IMR-90 (cell line): ENCODE measurements at regions of chr1 and their contacts with region 1.

Region 1: DNA sequence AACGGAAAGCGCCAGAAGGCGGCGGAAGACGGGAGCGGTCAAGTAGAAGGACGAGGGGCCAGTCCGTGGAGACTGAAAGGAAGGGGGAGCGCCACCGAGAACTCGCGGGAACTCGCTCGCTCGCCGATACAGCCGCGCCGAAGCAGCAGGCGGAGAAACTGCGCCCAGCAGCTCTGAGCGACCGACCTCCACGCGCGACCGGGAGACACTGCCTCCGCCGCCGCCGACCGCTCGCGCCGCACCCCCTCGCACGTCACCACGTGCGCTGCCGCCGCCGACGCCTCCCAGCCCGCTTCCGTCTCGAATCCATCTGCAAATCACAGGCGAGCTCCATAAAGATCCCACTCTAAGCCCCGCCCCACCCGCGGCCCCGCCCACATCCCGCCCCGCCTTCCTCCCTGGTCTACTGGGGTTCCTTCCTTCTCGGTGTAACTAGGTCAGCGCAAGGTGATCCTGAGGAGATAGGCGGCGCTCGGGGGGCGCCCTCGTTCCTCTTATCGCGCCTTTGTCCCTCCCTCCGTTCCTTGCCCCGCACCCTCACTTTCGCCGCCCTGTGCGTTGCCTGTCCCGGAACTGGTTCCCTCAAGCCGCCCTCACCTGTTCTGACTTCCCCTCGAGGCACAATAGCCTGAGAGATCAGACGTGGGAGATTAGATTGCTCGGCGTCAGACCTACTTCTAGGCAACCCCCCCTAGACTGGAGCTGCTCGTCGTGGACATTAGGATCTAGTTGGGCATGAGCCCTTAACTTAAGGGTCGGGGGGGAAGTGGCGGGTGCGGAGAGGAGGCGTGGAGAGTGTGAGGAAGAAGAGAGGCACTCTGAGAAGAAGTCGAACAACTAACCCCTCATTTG is at the start of gene IVNS1ABP:
- DNase-seq: peak; percentile 87
- ATAC-seq: peak; percentile 84
- H3K4me3 ChIP-seq: peak within 1 kb of the TSS; percentile 89
- H3K27ac ChIP-seq: peak within 1 kb of the TSS; percentile 94
- H3K4me1 ChIP-seq: peaks cover 5% of the 10 kb centered on the region
- H3K27me3 ChIP-seq: no peaks in the 10 kb centered on the region
- CTCF ChIP-seq: no peak
- POLR2A ChIP-seq: peak; percentile 95
- RAD21 ChIP-seq: 0 out of 2 replicates have a peak, but pooled peaks have one; percentile 15
- total RNA-seq, gene IVNS1ABP: 26.7 and 41.9 TPM in 2 replicates

Region 2: GRCh38 chr1:185156854-185157598 is 160.2 kb before region 1 on chr1 and contains the starts of genes SWT1 and TRMT1L:
- CTCF ChIA-PET with region 1: no interaction called
- POLR2A ChIA-PET with region 1: interaction called, 4 read pairs
- dilution Hi-C with region 1: no loop called
- in situ Hi-C with region 1: no loop called
- intact Hi-C with region 1: loop called (anchors 5 kb)
- DNase-seq: peak; percentile 99
- ATAC-seq: peak; percentile 96
- H3K4me3 ChIP-seq: peak within 1 kb of the TSS; percentile 70
- H3K27ac ChIP-seq: peak within 1 kb of the TSS; percentile 90
- H3K4me1 ChIP-seq: peaks cover 2% of the 10 kb centered on the region; the same call in 1 of the 2 replicates
- H3K27me3 ChIP-seq: no peaks in the 10 kb centered on the region
- CTCF ChIP-seq: no peak
- POLR2A ChIP-seq: peak; percentile 93
- RAD21 ChIP-seq: no peak
- total RNA-seq, gene SWT1: 2.7 and 4.2 TPM in 2 replicates
- total RNA-seq, gene TRMT1L: 21.9 and 25.3 TPM in 2 replicates

Region 3: DNA sequence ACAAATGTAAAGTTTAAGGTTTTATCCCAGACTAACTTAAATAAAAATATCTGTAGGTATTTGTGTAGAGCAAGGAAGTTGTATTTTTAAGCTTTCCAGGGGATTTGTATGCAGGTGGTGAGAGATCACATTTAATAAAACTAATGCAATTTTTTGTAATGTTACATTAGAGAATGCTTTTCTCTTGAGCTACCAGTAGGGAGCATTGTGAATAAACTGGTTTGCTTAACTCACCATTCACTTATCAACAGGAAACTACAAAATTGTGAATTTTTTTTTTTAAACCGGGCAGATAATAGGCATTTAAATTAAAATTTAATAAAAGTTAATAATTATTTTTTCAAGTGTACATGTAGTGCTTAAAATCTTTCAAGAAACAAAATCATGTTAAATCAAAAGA is 78.8 kb before region 1 on chr1:
- CTCF ChIA-PET with region 1: interaction called, 3 read pairs
- POLR2A ChIA-PET with region 1: no interaction called
- dilution Hi-C with region 1: no loop called
- in situ Hi-C with region 1: no loop called
- intact Hi-C with region 1: loop called (anchors 5 kb)
- DNase-seq: peak; percentile 47
- ATAC-seq: peak; percentile 49; the same call in 1 of the 2 replicates
- H3K4me3 ChIP-seq: no peak overlapping the region
- H3K27ac ChIP-seq: no peak overlapping the region
- H3K4me1 ChIP-seq: no peaks in the 10 kb centered on the region
- H3K27me3 ChIP-seq: no peaks in the 10 kb centered on the region
- CTCF ChIP-seq: peak; percentile 59
- POLR2A ChIP-seq: no peak
- RAD21 ChIP-seq: peak; percentile 63

Region 4: DNA sequence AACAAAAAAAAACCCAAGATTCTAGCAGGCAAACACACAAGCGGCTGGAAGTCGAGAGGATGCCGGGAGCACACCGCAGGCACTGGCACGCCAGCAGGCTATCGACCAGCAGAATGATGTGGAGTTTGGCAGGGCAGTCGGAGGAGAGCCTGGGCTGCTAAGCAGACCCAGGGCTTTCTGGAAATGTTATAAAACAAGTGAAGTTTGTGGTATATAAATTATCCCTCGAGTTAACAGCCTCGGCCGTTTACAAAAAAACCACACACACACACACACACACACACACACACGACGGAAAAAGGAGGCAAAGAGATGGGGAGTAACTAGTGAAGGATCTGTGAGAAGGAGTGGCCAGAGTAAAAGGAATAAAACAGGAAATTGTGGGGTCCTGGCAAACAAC is 87.0 kb after region 1 on chr1:
- CTCF ChIA-PET with region 1: no interaction called
- POLR2A ChIA-PET with region 1: no interaction called
- dilution Hi-C with region 1: no loop called
- in situ Hi-C with region 1: no loop called
- intact Hi-C with region 1: loop called (anchors 5 kb)
- DNase-seq: peak; percentile 32
- ATAC-seq: peak; percentile 56
- H3K4me3 ChIP-seq: peak overlapping the region; percentile 37; the same call in 1 of the 2 replicates
- H3K27ac ChIP-seq: no peak overlapping the region
- H3K4me1 ChIP-seq: peaks cover 6% of the 10 kb centered on the region
- H3K27me3 ChIP-seq: no peaks in the 10 kb centered on the region
- CTCF ChIP-seq: no peak
- POLR2A ChIP-seq: no peak
- RAD21 ChIP-seq: no peak

Region 5: DNA sequence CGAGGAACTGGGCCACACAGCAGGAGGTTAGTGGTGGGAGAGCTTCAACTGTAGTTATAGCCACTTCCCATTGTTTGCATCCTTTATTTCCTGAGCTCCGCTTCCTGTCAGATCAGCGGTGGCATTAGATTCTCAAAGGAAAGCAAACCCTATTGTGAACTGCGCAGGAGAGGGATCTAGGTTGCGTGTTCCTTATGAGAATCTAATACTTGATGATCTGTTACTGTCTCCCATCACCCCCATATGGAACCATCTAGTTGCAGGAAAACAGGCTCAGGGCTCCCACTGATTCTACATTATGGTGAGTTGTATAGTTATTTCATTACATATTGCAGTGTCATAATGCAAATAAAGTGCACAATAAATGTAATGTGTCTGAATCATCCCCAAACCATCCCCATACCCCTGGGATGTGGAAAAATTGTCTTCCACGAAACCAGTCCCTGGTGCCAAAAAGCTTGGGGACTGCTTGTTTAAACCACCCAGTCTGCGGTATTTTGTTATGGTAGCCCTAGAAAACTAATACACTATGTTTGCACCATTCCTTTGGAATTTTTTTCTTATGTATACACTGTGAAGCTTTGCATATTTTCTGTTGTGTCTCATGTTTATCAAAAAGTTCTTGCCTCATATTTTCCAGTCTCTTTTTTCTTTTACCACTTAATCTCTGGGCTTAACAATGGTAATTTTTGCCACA is 136.4 kb after region 1 on chr1:
- CTCF ChIA-PET with region 1: no interaction called
- POLR2A ChIA-PET with region 1: no interaction called
- dilution Hi-C with region 1: no loop called
- in situ Hi-C with region 1: no loop called
- intact Hi-C with region 1: loop called (anchors 1 kb)
- DNase-seq: peak; percentile 92
- ATAC-seq: peak; percentile 97
- H3K4me3 ChIP-seq: no peak overlapping the region
- H3K27ac ChIP-seq: peak overlapping the region; percentile 61; the same call in 1 of the 2 replicates
- H3K4me1 ChIP-seq: peaks cover 5% of the 10 kb centered on the region
- H3K27me3 ChIP-seq: peaks cover 3% of the 10 kb centered on the region; the same call in 1 of the 2 replicates
- CTCF ChIP-seq: no peak
- POLR2A ChIP-seq: no peak
- RAD21 ChIP-seq: no peak

Region 6: GRCh38 chr1:185541871-185542301 is 224.6 kb after region 1 on chr1:
- CTCF ChIA-PET with region 1: no interaction called
- POLR2A ChIA-PET with region 1: no interaction called
- dilution Hi-C with region 1: no loop called
- in situ Hi-C with region 1: no loop called
- intact Hi-C with region 1: loop called (anchors 5 kb)
- DNase-seq: peak; percentile 65
- ATAC-seq: peak; percentile 87
- H3K4me3 ChIP-seq: no peak overlapping the region
- H3K27ac ChIP-seq: peak overlapping the region; percentile 100; the same call in 1 of the 2 replicates
- H3K4me1 ChIP-seq: peaks cover 14% of the 10 kb centered on the region
- H3K27me3 ChIP-seq: no peaks in the 10 kb centered on the region; the same call in 1 of the 2 replicates
- CTCF ChIP-seq: no peak
- POLR2A ChIP-seq: no peak
- RAD21 ChIP-seq: no peak

Region 7: GRCh38 chr1:185559684-185560331 is 242.5 kb after region 1 on chr1:
- CTCF ChIA-PET with region 1: no interaction called
- POLR2A ChIA-PET with region 1: no interaction called
- dilution Hi-C with region 1: no loop called
- in situ Hi-C with region 1: no loop called
- intact Hi-C with region 1: loop called (anchors 5 kb)
- DNase-seq: peak; percentile 46
- ATAC-seq: peak; percentile 77
- H3K4me3 ChIP-seq: no peak overlapping the region
- H3K27ac ChIP-seq: no peak overlapping the region
- H3K4me1 ChIP-seq: peaks cover 8% of the 10 kb centered on the region
- H3K27me3 ChIP-seq: no peaks in the 10 kb centered on the region
- CTCF ChIP-seq: peak; percentile 44
- POLR2A ChIP-seq: no peak
- RAD21 ChIP-seq: peak; percentile 62